Vagina (tissue), 2 donors: ENCODE measurements at regions of chr16 and their contacts with region 1.

Region 1: DNA sequence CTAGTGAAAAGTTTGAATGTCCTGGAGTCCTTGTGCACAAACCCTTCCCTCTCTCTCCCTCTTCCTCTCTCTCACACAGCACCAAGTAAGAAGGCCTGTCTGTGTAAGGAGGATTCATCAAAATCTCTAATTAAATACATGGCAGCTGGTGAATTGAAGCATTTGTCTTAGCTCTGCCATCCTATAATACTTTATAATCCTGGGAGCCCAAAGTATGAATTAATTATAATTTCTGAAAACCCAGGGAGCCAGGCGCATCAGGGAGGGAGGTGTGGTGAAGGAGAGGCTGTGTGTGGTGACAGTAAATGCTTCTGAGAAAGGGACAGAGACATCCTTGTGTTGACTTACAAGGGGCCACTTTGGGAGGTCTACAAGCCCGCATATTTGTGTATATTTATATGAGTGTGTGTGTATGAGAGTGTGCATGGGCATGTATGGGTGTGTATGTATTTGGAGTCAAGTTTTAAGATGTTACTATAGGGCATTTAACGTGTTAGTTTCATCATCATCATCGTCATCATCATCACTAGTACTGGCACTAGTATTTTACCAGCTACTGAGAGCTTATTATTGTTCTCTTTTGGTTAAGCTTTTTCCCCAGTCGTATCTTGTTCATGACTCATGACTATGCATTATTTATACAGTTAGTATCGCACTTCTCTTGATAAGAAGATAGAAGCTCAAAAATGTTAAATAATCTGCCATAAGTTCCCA is 691.6 kb upstream of the EEF2KMT start:
- DNase-seq: no peak
- H3K4me3 ChIP-seq: no peak overlapping the region
- H3K27ac ChIP-seq: no peak overlapping the region
- H3K4me1 ChIP-seq: no peaks in the 10 kb centered on the region
- H3K27me3 ChIP-seq: no peaks in the 10 kb centered on the region
- CTCF ChIP-seq: no peak
- POLR2A ChIP-seq: no peak

Region 2: GRCh38 chr16:5903153-5903552 is 114.0 kb after region 1 on chr16:
- intact Hi-C with region 1: loop called (anchors 5 kb)
- DNase-seq: no peak
- H3K4me3 ChIP-seq: no peak overlapping the region
- H3K27ac ChIP-seq: no peak overlapping the region
- H3K4me1 ChIP-seq: no peaks in the 10 kb centered on the region
- H3K27me3 ChIP-seq: no peaks in the 10 kb centered on the region
- CTCF ChIP-seq: no peak
- POLR2A ChIP-seq: no peak